Activated naive CD8-positive, alpha-beta T cell treated with anti-CD3 and anti-CD28 coated beads, Interleukin-2, amount 10 ng/mL, durations not matched to agents 7 days and 5 days (primary cell): ENCODE measurements at regions of chr2 and their contacts with region 1.

Region 1: DNA sequence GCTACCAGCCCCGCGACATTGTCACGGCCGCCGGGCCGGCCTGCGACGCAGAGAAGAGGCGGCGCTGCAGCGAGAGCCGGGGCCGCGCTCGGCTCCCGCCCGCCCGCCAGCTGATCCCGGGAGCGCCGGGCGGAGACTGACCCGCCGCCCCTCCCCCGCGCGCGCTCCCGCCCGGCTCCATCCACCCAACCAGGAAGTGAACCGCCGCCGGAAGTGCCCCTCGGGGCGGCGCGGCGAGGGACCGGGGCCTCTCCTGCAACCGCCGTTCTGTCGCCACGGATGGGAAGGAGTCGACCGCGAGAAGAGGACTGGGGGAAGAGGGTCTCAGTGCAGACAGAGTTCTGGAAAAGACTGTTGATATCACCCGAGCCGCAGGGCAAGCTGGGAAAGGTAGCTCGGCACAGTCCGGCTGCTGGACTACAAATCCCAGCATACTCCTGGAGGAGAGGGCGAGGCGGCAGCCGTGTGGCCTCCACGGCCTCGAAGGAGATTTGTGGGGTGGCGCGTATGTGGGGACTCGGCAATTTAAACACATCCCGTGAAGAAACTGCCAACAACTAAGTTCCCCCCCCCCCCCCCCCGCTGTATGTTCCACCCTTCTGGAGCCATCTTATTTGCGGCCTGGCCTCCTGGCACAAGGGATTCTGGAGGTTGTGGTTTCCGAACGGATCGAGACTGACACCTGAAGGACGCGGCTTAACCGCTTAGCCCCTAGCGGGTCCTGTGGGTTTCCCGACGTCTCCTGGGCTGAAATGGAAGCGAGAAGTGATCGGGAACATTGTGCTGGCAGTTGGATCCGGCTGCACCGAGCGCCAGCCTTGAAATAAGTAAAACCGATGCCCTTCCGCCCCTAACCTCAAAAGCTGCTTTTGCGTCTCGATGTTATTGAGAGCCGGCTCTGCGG is at the start of gene AAK1:
- DNase-seq: peak; percentile 92
- ATAC-seq: peak; percentile 59
- H3K4me3 Mint-ChIP-seq: peak within 1 kb of the TSS; percentile 98
- H3K27ac Mint-ChIP-seq: peak within 1 kb of the TSS; percentile 99
- H3K4me1 Mint-ChIP-seq: peaks cover 62% of the 10 kb centered on the region
- H3K27me3 Mint-ChIP-seq: no peaks in the 10 kb centered on the region
- total RNA-seq, gene AAK1: 143 to 144 TPM

Region 2: DNA sequence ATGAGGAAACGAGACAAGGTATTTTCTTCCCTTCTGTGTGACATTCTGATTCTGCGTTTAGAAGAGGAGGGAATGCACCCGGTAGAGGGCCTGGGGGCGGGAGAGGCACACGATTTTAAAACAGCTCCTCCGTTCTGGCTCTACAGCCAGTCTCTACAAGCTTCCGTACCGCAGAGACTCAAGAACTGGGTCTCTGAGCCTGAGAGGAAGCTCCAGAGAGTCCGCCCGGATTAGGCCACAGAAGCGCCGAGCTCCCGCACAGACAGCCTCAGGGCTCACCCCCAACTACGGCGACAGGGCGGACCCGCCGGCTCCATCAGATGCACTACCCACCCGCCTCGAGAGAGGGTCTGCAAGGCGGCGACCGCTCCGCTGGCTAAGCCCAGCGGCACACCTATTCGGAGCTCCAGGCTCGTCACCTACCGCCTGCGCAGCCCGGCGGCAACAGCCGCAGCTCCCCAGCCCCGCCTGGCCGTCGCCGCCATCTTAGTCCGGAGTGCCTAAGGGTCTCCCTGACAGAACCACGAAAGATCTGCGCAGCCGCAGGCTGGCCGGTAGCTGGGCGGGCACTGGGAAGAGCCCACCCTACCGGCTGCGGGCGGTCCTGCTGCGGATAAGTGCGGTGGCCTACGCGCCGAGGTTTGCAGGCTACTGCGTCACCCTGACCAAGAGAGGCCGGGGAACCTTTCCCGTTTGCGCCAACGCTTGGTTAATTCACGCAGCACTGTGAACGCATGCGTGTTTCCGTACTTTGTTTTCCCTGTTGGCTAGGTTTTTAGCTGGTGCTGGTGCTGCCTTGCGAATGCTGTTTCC is 206.7 kb before region 1 on chr2 and contains the start of gene NFU1:
- POLR2A ChIA-PET with region 1: interaction called, 12 read pairs
- DNase-seq: peak; percentile 91
- ATAC-seq: peak; percentile 93
- H3K4me3 Mint-ChIP-seq: peak within 1 kb of the TSS; percentile 84
- H3K27ac Mint-ChIP-seq: peak within 1 kb of the TSS; percentile 95
- H3K4me1 Mint-ChIP-seq: peaks cover 29% of the 10 kb centered on the region
- H3K27me3 Mint-ChIP-seq: no peaks in the 10 kb centered on the region
- total RNA-seq, gene NFU1: 32.9 to 33.0 TPM

Region 3: DNA sequence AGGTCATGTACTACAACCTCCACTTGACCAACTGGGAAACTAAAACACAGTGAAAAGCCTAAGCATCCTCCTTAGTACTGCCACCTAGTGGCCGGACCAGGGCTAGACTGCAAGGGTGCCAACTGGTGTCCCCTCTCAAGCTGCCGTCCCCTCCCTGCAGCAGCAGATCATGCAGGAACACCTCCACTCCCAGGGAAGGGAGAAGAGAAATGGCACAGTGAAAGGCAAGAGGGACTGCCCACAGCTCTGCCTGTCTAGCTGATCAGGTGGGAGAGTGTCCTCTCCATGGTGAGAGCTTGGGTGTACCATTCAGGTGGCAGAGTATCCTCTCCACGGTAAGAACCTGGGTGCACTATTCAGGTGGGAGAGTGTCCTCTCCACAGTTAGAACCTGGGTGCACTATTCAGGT is 78.4 kb before region 1 on chr2:
- POLR2A ChIA-PET with region 1: interaction called, 13 read pairs
- DNase-seq: peak; percentile 73
- ATAC-seq: peak; percentile 86
- H3K4me3 Mint-ChIP-seq: no peak overlapping the region
- H3K27ac Mint-ChIP-seq: peak overlapping the region; percentile 40
- H3K4me1 Mint-ChIP-seq: peaks cover 54% of the 10 kb centered on the region
- H3K27me3 Mint-ChIP-seq: no peaks in the 10 kb centered on the region

Region 4: GRCh38 chr2:69623236-69623635 is 20.6 kb before region 1 on chr2:
- POLR2A ChIA-PET with region 1: interaction called, 29 read pairs
- DNase-seq: no peak
- ATAC-seq: no peak
- H3K4me3 Mint-ChIP-seq: peak overlapping the region; percentile 77
- H3K27ac Mint-ChIP-seq: peak overlapping the region; percentile 83
- H3K4me1 Mint-ChIP-seq: peaks cover 18% of the 10 kb centered on the region
- H3K27me3 Mint-ChIP-seq: no peaks in the 10 kb centered on the region

Region 5: DNA sequence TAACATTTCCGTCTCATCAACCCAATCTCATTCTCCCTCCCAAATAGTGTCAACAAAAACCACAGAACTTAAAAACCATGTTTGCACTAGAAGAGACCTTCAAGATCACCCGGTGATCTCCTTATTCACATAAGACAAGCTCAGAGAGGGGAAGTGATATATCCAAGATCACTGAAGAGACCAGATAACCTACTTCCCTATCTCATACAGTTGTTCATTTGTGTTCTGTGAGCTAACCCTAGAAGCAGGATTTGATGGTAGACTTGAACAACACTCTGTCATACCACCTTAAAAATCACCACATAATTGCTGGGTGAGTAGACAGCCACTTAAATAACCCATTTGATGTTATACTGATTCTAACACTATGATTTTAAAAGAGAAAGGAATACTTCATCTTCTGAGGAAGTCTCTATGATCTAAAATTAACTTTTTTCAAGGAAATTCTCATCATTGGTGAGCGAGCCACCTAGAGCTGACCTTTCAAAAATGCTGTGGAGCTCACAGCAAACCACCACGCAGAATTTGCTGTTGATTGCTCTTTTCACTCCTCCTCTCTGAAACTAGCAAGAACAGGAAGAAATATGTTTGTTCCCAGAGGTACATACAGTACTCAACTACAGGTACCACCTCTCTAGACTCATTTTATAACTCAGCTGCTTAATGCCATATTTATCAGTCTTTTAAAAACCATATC is 15.4 kb before region 1 on chr2:
- POLR2A ChIA-PET with region 1: interaction called, 29 read pairs
- DNase-seq: no peak
- ATAC-seq: peak; percentile 62
- H3K4me3 Mint-ChIP-seq: no peak overlapping the region
- H3K27ac Mint-ChIP-seq: no peak overlapping the region
- H3K4me1 Mint-ChIP-seq: peaks cover 17% of the 10 kb centered on the region
- H3K27me3 Mint-ChIP-seq: no peaks in the 10 kb centered on the region

Region 6: GRCh38 chr2:69694894-69695849 is 51.3 kb after region 1 on chr2:
- POLR2A ChIA-PET with region 1: interaction called, 61 read pairs
- DNase-seq: no peak
- ATAC-seq: no peak
- H3K4me3 Mint-ChIP-seq: peak overlapping the region; percentile 3
- H3K27ac Mint-ChIP-seq: no peak overlapping the region
- H3K4me1 Mint-ChIP-seq: peaks cover 50% of the 10 kb centered on the region
- H3K27me3 Mint-ChIP-seq: no peaks in the 10 kb centered on the region